ENCODE measurements at regions of chr1 and their contacts with region 1.

Region 1: DNA sequence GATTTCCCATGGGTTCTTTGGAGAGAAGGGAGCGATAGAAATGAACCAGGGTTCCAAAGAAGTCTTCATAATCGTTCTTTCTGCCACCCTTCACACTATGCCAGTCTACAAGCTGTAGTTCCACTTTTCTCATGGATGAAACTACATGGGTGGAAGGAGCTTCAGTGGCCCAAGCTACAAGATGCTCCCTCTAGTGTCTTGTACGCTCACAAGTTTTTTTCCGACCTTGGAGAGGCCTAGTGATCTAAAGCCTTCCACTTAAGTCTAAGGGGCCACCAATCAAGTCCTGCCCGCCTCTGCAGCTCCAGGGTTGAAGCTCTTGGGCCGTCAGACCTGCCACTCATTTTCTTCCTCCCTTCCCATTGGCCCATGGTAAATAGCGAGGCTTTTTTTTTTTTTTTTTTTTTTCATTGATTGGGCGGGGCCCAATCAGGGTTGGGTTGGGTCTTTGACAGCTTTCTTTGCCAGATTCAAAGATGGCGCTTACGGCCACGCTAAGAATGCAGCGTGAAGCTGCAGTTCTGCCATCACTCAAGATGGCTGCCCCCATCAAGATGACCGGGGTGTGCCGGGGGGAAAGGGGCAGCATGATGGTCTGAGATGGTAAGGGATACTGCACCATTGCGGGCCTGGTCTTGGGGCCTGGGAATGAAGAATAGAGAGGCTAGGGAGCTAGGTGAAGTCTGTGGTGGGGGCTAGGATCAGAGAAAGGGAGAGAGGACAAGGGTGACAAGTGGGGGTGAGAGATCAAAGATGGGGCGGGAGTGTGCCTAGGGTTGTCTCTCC is at the start of gene TOMM40L:
- DNase-seq: peak; percentile 97
- ATAC-seq: peak; percentile 96
- H3K4me3 ChIP-seq: peak within 1 kb of the TSS; percentile 83
- H3K27ac ChIP-seq: peak within 1 kb of the TSS; percentile 70
- H3K4me1 ChIP-seq: peaks cover 19% of the 10 kb centered on the region
- H3K27me3 ChIP-seq: no peaks in the 10 kb centered on the region
- CTCF ChIP-seq: peak; percentile 61 to 66 (median 64)
- EP300 ChIP-seq: no peak
- POLR2A ChIP-seq: peak; percentile 62; the same call in 1 of the 2 replicates
- RAD21 ChIP-seq: peak; percentile 61
- polyA plus RNA-seq, gene TOMM40L: 5.9 to 10.0 TPM

Region 2: GRCh38 chr1:160768295-160768657 is 457.5 kb before region 1 on chr1:
- CTCF ChIA-PET with region 1: no interaction called
- POLR2A ChIA-PET with region 1: no interaction called
- RAD21 ChIA-PET with region 1: no interaction called
- SMC1A ChIA-PET with region 1: no interaction called
- in situ Hi-C with region 1: no loop called
- intact Hi-C with region 1: no loop called
- DNase-seq: peak; percentile 84
- ATAC-seq: peak; percentile 94
- H3K4me3 ChIP-seq: peak overlapping the region; percentile 59
- H3K27ac ChIP-seq: peak overlapping the region; percentile 89
- H3K4me1 ChIP-seq: peaks cover 23% of the 10 kb centered on the region
- H3K27me3 ChIP-seq: no peaks in the 10 kb centered on the region
- CTCF ChIP-seq: peak; percentile 90 to 97 (median 91)
- EP300 ChIP-seq: no peak
- POLR2A ChIP-seq: no peak; the same call in 1 of the 2 replicates
- RAD21 ChIP-seq: peak; percentile 96

Region 3: DNA sequence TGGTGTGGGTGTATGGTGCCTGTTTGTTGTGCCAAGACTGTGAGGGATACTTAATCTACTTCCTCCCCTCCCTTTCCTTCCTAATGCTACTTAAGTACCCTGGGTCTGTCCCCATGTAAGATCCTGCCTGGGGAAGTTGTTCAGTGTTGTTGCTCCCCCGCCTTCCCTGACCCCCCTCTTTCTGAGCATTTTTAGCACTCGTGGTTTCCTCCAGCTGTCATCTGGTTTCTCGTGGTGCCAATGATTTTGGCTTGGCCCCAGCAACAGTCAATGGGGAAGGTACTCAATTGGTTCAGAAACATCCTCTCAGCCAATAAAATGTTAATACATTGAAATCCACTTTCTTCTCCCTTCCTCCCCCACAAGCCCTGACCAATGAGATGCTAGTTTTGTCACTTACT is 40.4 kb before region 1 on chr1:
- CTCF ChIA-PET with region 1: interaction called, 164 read pairs
- POLR2A ChIA-PET with region 1: interaction called, 8 read pairs
- RAD21 ChIA-PET with region 1: interaction called, 55 read pairs
- SMC1A ChIA-PET with region 1: interaction called, 50 read pairs
- in situ Hi-C with region 1: no loop called
- intact Hi-C with region 1: no loop called
- DNase-seq: peak; percentile 98
- ATAC-seq: peak; percentile 84
- H3K4me3 ChIP-seq: no peak overlapping the region
- H3K27ac ChIP-seq: peak overlapping the region; percentile 97
- H3K4me1 ChIP-seq: peaks cover 57% of the 10 kb centered on the region
- H3K27me3 ChIP-seq: no peaks in the 10 kb centered on the region
- CTCF ChIP-seq: no peak
- EP300 ChIP-seq: no peak; a peak in 1 of 4 replicates
- POLR2A ChIP-seq: peak; percentile 42; the same call in 1 of the 2 replicates
- RAD21 ChIP-seq: no peak

Region 4: DNA sequence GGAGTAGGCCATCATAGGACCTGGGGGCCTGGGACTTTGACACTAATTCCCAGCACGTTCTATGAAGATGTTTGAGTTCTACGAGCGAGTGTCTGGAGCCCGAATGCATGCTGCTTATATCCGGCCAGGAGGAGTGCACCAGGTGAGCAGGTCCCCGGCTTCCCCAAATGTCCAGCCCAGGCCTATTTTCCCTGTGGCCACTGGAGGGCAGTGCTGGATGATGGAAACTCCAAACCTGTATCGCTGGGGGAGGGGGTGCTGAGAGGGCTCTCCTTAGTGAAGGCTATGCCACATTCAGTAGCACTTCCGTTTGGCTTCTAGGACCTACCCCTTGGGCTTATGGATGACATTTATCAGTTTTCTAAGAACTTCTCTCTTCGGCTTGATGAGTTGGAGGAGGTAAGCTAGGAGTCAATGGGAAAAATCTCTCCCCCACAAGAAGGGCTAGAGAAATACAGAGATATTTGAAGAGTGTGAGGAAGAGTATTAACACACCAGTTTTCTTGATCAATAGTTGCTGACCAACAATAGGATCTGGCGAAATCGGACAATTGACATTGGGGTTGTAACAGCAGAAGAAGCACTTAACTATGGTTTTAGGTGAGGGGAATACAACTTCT is 15.8 kb before region 1 on chr1:
- CTCF ChIA-PET with region 1: interaction called, 385 read pairs
- POLR2A ChIA-PET with region 1: interaction called, 4 read pairs
- RAD21 ChIA-PET with region 1: interaction called, 72 read pairs
- SMC1A ChIA-PET with region 1: interaction called, 66 read pairs
- in situ Hi-C with region 1: no loop called
- intact Hi-C with region 1: no loop called
- DNase-seq: no peak
- ATAC-seq: peak; percentile 99
- H3K4me3 ChIP-seq: no peak overlapping the region
- H3K27ac ChIP-seq: no peak overlapping the region
- H3K4me1 ChIP-seq: no peaks in the 10 kb centered on the region
- H3K27me3 ChIP-seq: no peaks in the 10 kb centered on the region
- CTCF ChIP-seq: peak; percentile 88 to 94 (median 89)
- EP300 ChIP-seq: no peak
- POLR2A ChIP-seq: no peak
- RAD21 ChIP-seq: peak; percentile 93

Region 5: GRCh38 chr1:161287482-161288054 is 61.8 kb after region 1 on chr1:
- CTCF ChIA-PET with region 1: interaction called, 98 read pairs
- POLR2A ChIA-PET with region 1: interaction called, 4 read pairs
- RAD21 ChIA-PET with region 1: interaction called, 32 read pairs
- SMC1A ChIA-PET with region 1: interaction called, 62 read pairs
- in situ Hi-C with region 1: loop called (anchors 5 kb)
- intact Hi-C with region 1: loop called (anchors 2 kb)
- DNase-seq: no peak
- ATAC-seq: peak; percentile 27; the same call in 1 of the 3 replicates
- H3K4me3 ChIP-seq: no peak overlapping the region
- H3K27ac ChIP-seq: no peak overlapping the region
- H3K4me1 ChIP-seq: no peaks in the 10 kb centered on the region
- H3K27me3 ChIP-seq: peaks cover 0 to 3% of the 10 kb centered on the region in 2 experiments; a peak in 1 of 4 replicates
- CTCF ChIP-seq: no peak
- EP300 ChIP-seq: no peak
- POLR2A ChIP-seq: no peak
- RAD21 ChIP-seq: no peak

Region 6: DNA sequence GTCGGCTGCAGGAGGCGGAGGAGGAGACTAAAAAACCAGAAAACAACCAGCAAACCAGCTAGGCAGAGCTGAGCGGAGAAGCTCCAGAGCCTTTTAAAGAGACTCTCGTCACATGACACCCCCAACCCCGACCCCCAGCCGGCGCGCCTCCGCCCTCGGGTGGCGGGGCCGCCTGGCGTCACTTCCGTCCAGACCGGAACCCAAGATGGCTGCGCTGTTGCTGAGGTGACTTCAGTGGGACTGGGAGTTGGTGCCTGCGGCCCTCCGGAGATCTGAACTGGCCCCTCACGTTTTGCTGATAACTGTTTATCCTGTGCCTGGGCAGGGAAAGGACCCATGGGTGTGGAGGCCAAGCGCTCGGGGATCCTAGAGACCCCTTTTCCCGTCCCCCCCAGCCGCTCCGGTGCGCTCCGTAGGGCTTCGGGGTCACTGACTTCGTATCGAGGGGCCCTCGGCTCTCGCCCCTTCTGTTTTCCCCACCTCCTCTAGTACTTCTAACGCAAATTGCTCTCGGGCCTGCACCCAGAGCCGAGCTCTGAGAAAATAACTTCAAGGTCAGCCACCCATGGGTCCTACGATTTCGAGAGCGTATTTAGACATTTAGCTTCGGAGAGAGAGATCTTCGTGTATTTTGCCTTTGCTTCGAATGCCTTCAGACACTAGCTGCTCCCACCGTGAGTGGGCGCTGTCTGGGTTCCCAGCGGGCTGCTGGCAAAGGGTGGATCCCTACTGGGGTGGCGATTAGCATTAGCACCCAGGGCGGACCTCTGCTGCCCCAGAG is 88.7 kb after region 1 on chr1 and contains the start of gene SDHC:
- CTCF ChIA-PET with region 1: interaction called, 13 read pairs
- POLR2A ChIA-PET with region 1: interaction called, 3 read pairs
- RAD21 ChIA-PET with region 1: interaction called, 6 read pairs
- SMC1A ChIA-PET with region 1: interaction called, 5 read pairs
- in situ Hi-C with region 1: no loop called
- intact Hi-C with region 1: loop called (anchors 5 kb)
- DNase-seq: no peak
- ATAC-seq: peak; percentile 99
- H3K4me3 ChIP-seq: peak within 1 kb of the TSS; percentile 80
- H3K27ac ChIP-seq: peak within 1 kb of the TSS; percentile 65
- H3K4me1 ChIP-seq: peaks cover 3% of the 10 kb centered on the region; the same call in 1 of the 2 replicates
- H3K27me3 ChIP-seq: no peaks in the 10 kb centered on the region
- CTCF ChIP-seq: peak; percentile 26 to 48 (median 43); a peak in 5 of 6 replicates
- EP300 ChIP-seq: no peak
- POLR2A ChIP-seq: peak; percentile 93
- RAD21 ChIP-seq: no peak
- polyA plus RNA-seq, gene SDHC: 115 to 340 TPM

Region 7: DNA sequence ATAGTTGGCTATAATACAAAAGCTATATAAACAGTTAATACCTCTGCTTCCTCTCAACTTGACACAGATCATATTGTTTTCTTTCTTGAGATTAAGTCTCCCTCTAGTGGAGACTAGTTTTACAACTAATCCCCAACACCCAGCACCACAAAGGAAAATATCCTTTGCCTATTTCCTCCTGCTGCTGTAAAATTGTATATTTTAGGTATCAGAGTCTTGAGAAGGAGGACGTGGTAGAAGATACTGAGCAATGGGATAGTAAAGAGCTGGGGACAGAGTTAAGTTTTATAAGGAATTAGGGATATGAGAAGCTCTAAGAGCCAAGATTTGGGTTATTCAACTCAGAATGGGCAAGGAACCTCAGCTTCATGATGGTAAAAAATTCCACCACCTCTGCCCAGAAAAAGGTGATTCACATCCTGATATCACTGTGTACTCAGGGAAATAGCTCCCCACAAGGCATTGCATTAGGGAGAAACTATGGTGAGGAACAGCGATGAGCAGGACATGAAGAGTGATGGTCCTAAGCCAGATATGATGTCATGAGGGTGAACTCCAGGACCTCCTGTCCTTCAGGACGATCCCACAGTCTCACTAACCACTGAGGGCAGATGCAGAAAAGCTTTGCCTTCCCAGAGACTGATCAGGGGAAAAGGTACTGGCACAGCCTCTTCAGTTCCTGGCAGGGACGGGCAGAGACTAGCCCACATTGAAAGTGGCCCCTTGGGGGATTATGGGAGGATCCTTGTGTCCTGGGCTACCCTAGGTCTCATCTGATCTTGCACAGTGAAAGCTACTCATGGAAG is 156.7 kb after region 1 on chr1:
- CTCF ChIA-PET with region 1: interaction called, 204 read pairs
- POLR2A ChIA-PET with region 1: interaction called, 6 read pairs
- RAD21 ChIA-PET with region 1: interaction called, 77 read pairs
- SMC1A ChIA-PET with region 1: interaction called, 72 read pairs
- in situ Hi-C with region 1: loop called (anchors 5 kb)
- intact Hi-C with region 1: loop called (anchors 1 kb)
- DNase-seq: no peak
- ATAC-seq: peak; percentile 94
- H3K4me3 ChIP-seq: no peak overlapping the region
- H3K27ac ChIP-seq: no peak overlapping the region
- H3K4me1 ChIP-seq: peaks cover 14% of the 10 kb centered on the region; the same call in 1 of the 2 replicates
- H3K27me3 ChIP-seq: no peaks in the 10 kb centered on the region
- CTCF ChIP-seq: peak; percentile 39 to 75 (median 54); a peak in 5 of 6 replicates
- EP300 ChIP-seq: no peak
- POLR2A ChIP-seq: no peak
- RAD21 ChIP-seq: peak; percentile 78

Measured in GM12878 (cell line).